ENCODE measurements at regions of chr5 and their contacts with region 1.

Region 1: DNA sequence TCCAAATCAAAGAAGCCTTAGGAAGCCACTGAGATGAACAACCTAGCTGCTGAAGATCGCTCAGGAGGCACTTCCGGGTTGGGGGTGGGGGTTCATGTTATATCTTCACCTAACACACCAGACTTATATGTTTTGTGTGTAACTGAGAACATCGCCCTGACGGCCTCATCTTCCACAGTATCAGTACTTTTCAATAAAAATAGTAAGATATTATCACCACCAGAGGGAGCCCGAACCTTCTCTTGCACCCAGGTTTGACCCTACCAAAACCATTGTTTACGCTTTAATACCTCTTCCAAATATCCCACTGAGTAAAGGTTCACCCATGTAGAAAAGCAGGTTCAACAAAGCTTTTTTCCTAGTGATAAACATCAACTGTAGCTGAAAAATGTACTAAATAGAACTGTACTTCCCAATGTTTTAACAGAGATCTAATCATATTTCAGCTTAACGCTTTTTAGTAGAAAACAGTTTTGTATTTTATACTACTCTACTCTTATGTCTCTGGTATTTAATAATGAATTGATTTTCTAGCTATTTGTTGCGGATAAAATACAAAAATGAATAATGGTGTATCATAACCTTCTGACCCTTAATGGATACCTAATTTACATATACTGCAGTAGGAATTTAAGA is 244.0 kb downstream of the EPB41L4A start:
- DNase-seq: no peak
- H3K4me3 ChIP-seq: no peak overlapping the region
- H3K27ac ChIP-seq: no peak overlapping the region
- H3K4me1 ChIP-seq: no peaks in the 10 kb centered on the region
- H3K27me3 ChIP-seq: no peaks in the 10 kb centered on the region
- CTCF ChIP-seq: peak in 2 of 3 experiments; percentile 60 to 63; a peak in 3 of 4 replicates
- EP300 ChIP-seq: no peak
- POLR2A ChIP-seq: no peak
- RAD21 ChIP-seq: peak; percentile 82 to 87

Region 2: DNA sequence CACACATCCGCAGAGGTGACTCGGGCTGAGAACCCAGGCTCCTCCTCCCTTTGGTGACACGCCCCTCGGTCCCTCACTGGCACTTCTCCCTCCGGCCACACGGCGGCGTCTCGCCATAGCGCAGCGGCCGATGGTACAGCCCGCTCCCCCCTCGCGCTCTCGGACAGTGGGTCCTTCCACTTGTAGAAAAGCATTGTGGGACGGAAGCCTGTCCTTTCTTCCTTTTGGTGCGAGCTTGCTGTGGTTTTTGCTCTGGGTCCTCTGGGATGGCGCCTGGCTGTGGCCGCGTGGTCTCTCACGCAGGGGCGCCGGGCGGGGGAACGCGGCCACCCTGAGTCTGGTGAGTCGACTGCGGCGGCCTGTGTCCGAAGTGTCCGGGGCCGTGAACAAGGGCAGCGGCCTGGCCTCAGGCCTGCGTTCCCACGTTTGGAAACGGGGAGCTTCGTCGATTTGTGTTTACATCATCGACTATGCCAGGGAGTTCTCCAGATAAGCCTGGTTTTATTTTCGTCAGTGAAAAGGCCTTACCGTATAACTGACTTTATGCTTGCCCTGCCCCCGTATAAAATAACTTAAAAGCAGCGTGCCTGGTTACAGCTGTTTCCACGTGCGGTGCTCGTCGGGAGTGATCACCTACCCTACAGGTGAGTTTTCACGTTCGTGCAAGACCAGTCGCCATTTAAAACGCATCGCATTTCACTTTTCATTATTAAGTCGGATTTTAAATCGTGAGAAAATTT is 14.3 kb before region 1 on chr5:
- CTCF ChIA-PET with region 1: interaction called, 23 read pairs
- POLR2A ChIA-PET with region 1: interaction called, 76 read pairs
- DNase-seq: peak; percentile 70 to 98
- H3K4me3 ChIP-seq: peak overlapping the region; percentile 86 to 99 (median 96)
- H3K27ac ChIP-seq: peak overlapping the region; percentile 91
- H3K4me1 ChIP-seq: peaks cover 3 to 10% (median 3%) of the 10 kb centered on the region in 4 experiments; a peak in 4 of 7 replicates
- H3K27me3 ChIP-seq: no peaks in the 10 kb centered on the region
- CTCF ChIP-seq: peak; percentile 94 to 100 (median 100)
- EP300 ChIP-seq: peak in 1 of 2 experiments; percentile 100; a peak in 2 of 3 replicates
- POLR2A ChIP-seq: peak; percentile 97 to 99
- RAD21 ChIP-seq: peak; percentile 41 to 53

Region 3: DNA sequence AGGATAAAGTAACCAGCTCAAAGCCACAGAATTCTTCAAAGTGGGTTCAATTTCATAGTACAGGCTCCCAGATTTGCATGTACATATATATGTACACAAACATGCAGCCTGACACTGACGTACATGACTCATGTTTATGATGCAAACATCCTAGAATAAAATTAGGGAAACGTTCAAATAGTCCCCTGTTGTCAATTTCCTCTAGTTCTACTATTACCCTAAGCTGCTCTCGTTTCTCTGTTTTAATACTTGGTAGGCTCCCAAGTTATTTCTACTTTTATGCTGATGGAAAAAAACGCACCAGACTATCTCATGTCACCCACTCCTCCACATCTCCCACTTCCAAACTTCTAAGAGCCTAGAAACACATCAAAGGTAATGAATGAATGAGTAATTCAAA is 14.3 kb after region 1 on chr5:
- CTCF ChIA-PET with region 1: interaction called, 22 read pairs
- POLR2A ChIA-PET with region 1: no interaction called
- DNase-seq: no peak
- H3K4me3 ChIP-seq: no peak overlapping the region
- H3K27ac ChIP-seq: no peak overlapping the region
- H3K4me1 ChIP-seq: no peaks in the 10 kb centered on the region
- H3K27me3 ChIP-seq: no peaks in the 10 kb centered on the region
- CTCF ChIP-seq: no peak
- EP300 ChIP-seq: no peak
- POLR2A ChIP-seq: no peak
- RAD21 ChIP-seq: no peak

Region 4: DNA sequence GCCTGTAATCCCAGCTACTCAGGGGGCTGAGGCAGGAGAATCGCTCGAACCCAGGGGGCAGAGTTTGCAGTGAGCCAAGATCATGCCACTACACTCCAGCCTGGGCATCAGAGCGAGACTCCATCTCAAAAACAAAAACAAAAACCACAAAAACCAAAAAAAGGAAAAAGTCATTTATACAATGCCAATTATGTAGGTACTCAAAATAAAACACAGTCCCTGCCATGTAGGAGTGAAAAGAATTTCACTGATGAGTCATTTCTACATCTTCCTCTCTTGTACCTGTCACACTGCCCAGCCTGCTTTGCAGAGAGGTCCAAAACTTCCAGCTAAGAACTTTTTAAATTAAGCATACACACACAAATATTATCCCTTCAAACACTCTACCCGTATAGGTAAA is 28.2 kb after region 1 on chr5:
- CTCF ChIA-PET with region 1: interaction called, 14 read pairs
- POLR2A ChIA-PET with region 1: no interaction called
- DNase-seq: no peak
- H3K4me3 ChIP-seq: no peak overlapping the region
- H3K27ac ChIP-seq: no peak overlapping the region
- H3K4me1 ChIP-seq: peaks cover 0 to 11% (median 3%) of the 10 kb centered on the region in 4 experiments; a peak in 3 of 7 replicates
- H3K27me3 ChIP-seq: no peaks in the 10 kb centered on the region
- CTCF ChIP-seq: no peak
- EP300 ChIP-seq: no peak
- POLR2A ChIP-seq: no peak
- RAD21 ChIP-seq: no peak

Region 5: GRCh38 chr5:112529525-112529924 is 354.4 kb after region 1 on chr5:
- CTCF ChIA-PET with region 1: interaction called, 13 read pairs
- POLR2A ChIA-PET with region 1: no interaction called
- DNase-seq: no peak
- H3K4me3 ChIP-seq: no peak overlapping the region
- H3K27ac ChIP-seq: no peak overlapping the region
- H3K4me1 ChIP-seq: peaks cover 0 to 4% (median 2%) of the 10 kb centered on the region in 4 experiments; a peak in 3 of 7 replicates
- H3K27me3 ChIP-seq: no peaks in the 10 kb centered on the region
- CTCF ChIP-seq: peak in 2 of 3 experiments; percentile 37 to 60; a peak in 2 of 4 replicates
- EP300 ChIP-seq: no peak
- POLR2A ChIP-seq: no peak
- RAD21 ChIP-seq: peak; percentile 44 to 54

Measured in H1 (cell line).